ENCODE measurements at regions of chr13 and their contacts with region 1.

Region 1: GRCh38 chr13:31424117-31424729 is 224.4 kb downstream of the B3GLCT start:
- DNase-seq: peak; percentile 70 to 93
- H3K4me3 ChIP-seq: no peak overlapping the region
- CTCF ChIP-seq: peak in 1 of 3 donors; percentile 28
- POLR2A ChIP-seq: no peak

Region 2: DNA sequence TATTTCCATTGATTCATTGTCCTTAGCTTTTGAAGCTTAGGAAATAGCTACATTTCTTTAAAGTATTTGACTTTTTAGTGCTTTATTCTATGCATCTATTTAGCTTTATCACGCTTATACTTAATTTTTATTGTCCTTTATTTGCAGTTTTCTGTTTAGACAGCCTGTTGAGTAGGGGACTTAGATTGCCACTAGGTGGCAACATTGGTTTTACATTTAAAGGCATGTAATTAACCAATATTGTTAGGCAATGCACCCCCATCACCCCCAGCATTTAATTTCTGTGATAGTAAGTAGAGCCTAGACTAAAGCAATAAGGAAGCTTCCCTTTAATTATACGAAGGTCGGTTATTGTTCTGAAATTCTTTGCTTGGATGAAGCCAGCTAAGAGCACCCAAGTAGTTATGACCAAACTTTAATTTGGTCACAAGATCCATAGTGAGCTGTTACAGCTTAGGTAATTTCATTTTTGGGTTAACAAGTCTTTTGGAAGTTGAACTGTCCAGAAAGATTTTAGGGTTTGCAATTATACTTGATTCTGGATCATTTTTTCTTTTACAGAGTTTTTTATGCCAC is 187.9 kb before region 1 on chr13:
- intact Hi-C with region 1: loop called (anchors 10 kb)
- DNase-seq: no peak
- H3K4me3 ChIP-seq: no peak overlapping the region
- CTCF ChIP-seq: no peak
- POLR2A ChIP-seq: no peak